ENCODE measurements at regions of chr14 and their contacts with region 1.

Region 1: GRCh38 chr14:73153272-73153671 is 17.0 kb downstream of the PSEN1 start:
- DNase-seq: no peak
- ATAC-seq: no peak
- H3K4me3 ChIP-seq: no peak overlapping the region
- H3K4me3 Mint-ChIP-seq: no peak overlapping the region
- H3K27ac ChIP-seq: no peak overlapping the region
- H3K27ac Mint-ChIP-seq: no peak overlapping the region
- H3K4me1 ChIP-seq: no peaks in the 10 kb centered on the region
- H3K4me1 Mint-ChIP-seq: no peaks in the 10 kb centered on the region
- H3K27me3 ChIP-seq: no peaks in the 10 kb centered on the region
- H3K27me3 Mint-ChIP-seq: no peaks in the 10 kb centered on the region

Region 2: GRCh38 chr14:73236157-73236556 is 82.9 kb after region 1 on chr14:
- CTCF ChIA-PET with region 1: no interaction called
- POLR2A ChIA-PET with region 1: interaction called in 1 of 2 experiments, 10 read pairs
- DNase-seq: no peak
- ATAC-seq: no peak
- H3K4me3 ChIP-seq: no peak overlapping the region
- H3K4me3 Mint-ChIP-seq: peak overlapping the region in 1 of 3 donors; percentile 60
- H3K27ac ChIP-seq: no peak overlapping the region
- H3K27ac Mint-ChIP-seq: no peak overlapping the region
- H3K4me1 ChIP-seq: peaks cover 0 to 16% of the 10 kb centered on the region in 2 experiments
- H3K4me1 Mint-ChIP-seq: peaks cover 8 to 20% (median 8%) of the 10 kb centered on the region in 3 donors
- H3K27me3 ChIP-seq: peaks cover 13 to 84% of the 10 kb centered on the region in 2 experiments
- H3K27me3 Mint-ChIP-seq: peaks cover 46 to 66% of the 10 kb centered on the region in 2 donors